Calu3 (cell line): ENCODE measurements at regions of chr17 and their contacts with region 1.

Region 1: GRCh38 chr17:79741751-79742588 is 11.2 kb downstream of the ENPP7 start:
- DNase-seq: peak; percentile 91
- H3K4me3 Mint-ChIP-seq: peak overlapping the region; percentile 55
- H3K27ac Mint-ChIP-seq: no peak overlapping the region
- H3K4me1 Mint-ChIP-seq: peaks cover 35% of the 10 kb centered on the region
- H3K27me3 Mint-ChIP-seq: no peaks in the 10 kb centered on the region
- CTCF ChIP-seq: peak; percentile 93

Region 2: GRCh38 chr17:79721993-79722671 is 19.8 kb before region 1 on chr17:
- CTCF ChIA-PET with region 1: interaction called, 12 read pairs
- intact Hi-C with region 1: no loop called
- DNase-seq: peak; percentile 49
- H3K4me3 Mint-ChIP-seq: no peak overlapping the region
- H3K27ac Mint-ChIP-seq: no peak overlapping the region
- H3K4me1 Mint-ChIP-seq: no peaks in the 10 kb centered on the region
- H3K27me3 Mint-ChIP-seq: peaks cover 9% of the 10 kb centered on the region
- CTCF ChIP-seq: peak; percentile 20

Region 3: GRCh38 chr17:79777894-79778503 is 36.0 kb after region 1 on chr17 and contains the start of gene CBX2:
- CTCF ChIA-PET with region 1: interaction called, 3 read pairs
- intact Hi-C with region 1: loop called (anchors 5 kb)
- DNase-seq: peak; percentile 86
- H3K4me3 Mint-ChIP-seq: peak within 1 kb of the TSS; percentile 93
- H3K27ac Mint-ChIP-seq: peak within 1 kb of the TSS; percentile 66
- H3K4me1 Mint-ChIP-seq: peaks cover 7% of the 10 kb centered on the region
- H3K27me3 Mint-ChIP-seq: peaks cover 56% of the 10 kb centered on the region
- CTCF ChIP-seq: no peak
- total RNA-seq, gene CBX2: 6.3 and 8.3 TPM in 2 replicates

Region 4: GRCh38 chr17:79861413-79862216 is 119.6 kb after region 1 on chr17:
- CTCF ChIA-PET with region 1: no interaction called
- intact Hi-C with region 1: no loop called
- DNase-seq: no peak
- H3K4me3 Mint-ChIP-seq: no peak overlapping the region
- H3K27ac Mint-ChIP-seq: no peak overlapping the region
- H3K4me1 Mint-ChIP-seq: peaks cover 14% of the 10 kb centered on the region
- H3K27me3 Mint-ChIP-seq: peaks cover 75% of the 10 kb centered on the region
- CTCF ChIP-seq: no peak